Activated naive CD4-positive, alpha-beta T cell treated with anti-CD3 and anti-CD28 coated beads for 36 hours (primary cell): ENCODE measurements at regions of chr6 and their contacts with region 1.

Region 1: GRCh38 chr6:38871741-38872568 is 156.8 kb downstream of the DNAH8 start:
- DNase-seq: peak; percentile 82
- H3K4me3 Mint-ChIP-seq: no peak overlapping the region
- H3K27ac Mint-ChIP-seq: no peak overlapping the region
- H3K4me1 Mint-ChIP-seq: peaks cover 32% of the 10 kb centered on the region
- H3K27me3 Mint-ChIP-seq: no peaks in the 10 kb centered on the region

Region 2: DNA sequence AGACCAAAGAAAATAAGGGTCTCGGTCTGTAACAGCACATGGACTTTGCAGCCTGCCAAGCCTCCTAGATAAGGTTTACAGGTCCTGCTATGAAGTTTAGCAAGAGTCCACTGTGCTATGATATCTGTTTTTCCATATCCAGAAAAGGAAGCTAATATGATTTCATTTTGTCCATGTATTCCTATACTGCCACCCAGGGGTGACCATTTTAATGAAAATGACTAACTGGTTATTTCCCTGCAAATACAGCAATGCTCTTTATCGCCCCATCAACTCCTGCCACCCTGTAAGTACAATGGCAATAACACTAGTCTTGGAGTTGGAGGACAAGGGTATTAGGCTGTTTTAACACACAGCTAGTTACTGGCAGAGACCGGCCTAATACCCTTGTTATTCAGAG is 61.5 kb after region 1 on chr6:
- CTCF ChIA-PET with region 1: interaction called, 24 read pairs
- intact Hi-C with region 1: loop called (anchors 1 kb)
- DNase-seq: peak; percentile 8
- H3K4me3 Mint-ChIP-seq: no peak overlapping the region
- H3K27ac Mint-ChIP-seq: no peak overlapping the region
- H3K4me1 Mint-ChIP-seq: no peaks in the 10 kb centered on the region
- H3K27me3 Mint-ChIP-seq: no peaks in the 10 kb centered on the region

Region 3: GRCh38 chr6:38997128-38997761 is 125.3 kb after region 1 on chr6:
- CTCF ChIA-PET with region 1: interaction called, 11 read pairs
- intact Hi-C with region 1: no loop called
- DNase-seq: peak; percentile 56
- H3K4me3 Mint-ChIP-seq: no peak overlapping the region
- H3K27ac Mint-ChIP-seq: no peak overlapping the region
- H3K4me1 Mint-ChIP-seq: no peaks in the 10 kb centered on the region
- H3K27me3 Mint-ChIP-seq: peaks cover 19% of the 10 kb centered on the region

Region 4: GRCh38 chr6:39166189-39166911 is 294.4 kb after region 1 on chr6:
- CTCF ChIA-PET with region 1: interaction called, 13 read pairs
- intact Hi-C with region 1: loop called (anchors 2 kb)
- DNase-seq: peak; percentile 91
- H3K4me3 Mint-ChIP-seq: no peak overlapping the region
- H3K27ac Mint-ChIP-seq: no peak overlapping the region
- H3K4me1 Mint-ChIP-seq: no peaks in the 10 kb centered on the region
- H3K27me3 Mint-ChIP-seq: no peaks in the 10 kb centered on the region